ENCODE measurements at regions of chr9 and their contacts with region 1.

Region 1: GRCh38 chr9:15160673-15161072 is 146.3 kb downstream of the TTC39B start:
- DNase-seq: no peak
- ATAC-seq: no peak
- H3K4me3 ChIP-seq: no peak overlapping the region
- H3K4me1 ChIP-seq: no peaks in the 10 kb centered on the region
- CTCF ChIP-seq: no peak

Region 2: DNA sequence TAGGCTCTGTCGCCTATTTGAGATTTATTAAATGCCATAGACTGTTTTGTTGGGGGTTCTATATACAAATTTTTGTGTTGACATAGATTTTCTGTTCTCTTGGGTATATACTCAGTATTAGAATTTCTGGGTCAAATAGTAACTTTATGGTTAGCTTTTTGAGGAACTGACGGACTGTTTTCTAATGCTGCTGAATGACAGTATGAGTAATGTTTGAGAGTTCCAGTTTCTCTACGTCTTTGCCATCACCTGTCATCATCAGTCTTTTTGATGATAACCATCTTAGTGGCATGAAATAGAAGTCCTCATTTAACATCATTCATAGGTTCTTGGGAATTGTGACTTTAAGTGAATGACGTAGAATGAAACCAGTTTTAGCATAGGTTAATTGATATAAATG is 452.3 kb after region 1 on chr9:
- intact Hi-C with region 1: loop called in 1 of 2 experiments (anchors 5 kb)
- DNase-seq: no peak
- ATAC-seq: no peak
- H3K4me3 ChIP-seq: no peak overlapping the region
- H3K4me1 ChIP-seq: no peaks in the 10 kb centered on the region
- CTCF ChIP-seq: no peak